ENCODE measurements at regions of chr1 and their contacts with region 1.

Region 1: DNA sequence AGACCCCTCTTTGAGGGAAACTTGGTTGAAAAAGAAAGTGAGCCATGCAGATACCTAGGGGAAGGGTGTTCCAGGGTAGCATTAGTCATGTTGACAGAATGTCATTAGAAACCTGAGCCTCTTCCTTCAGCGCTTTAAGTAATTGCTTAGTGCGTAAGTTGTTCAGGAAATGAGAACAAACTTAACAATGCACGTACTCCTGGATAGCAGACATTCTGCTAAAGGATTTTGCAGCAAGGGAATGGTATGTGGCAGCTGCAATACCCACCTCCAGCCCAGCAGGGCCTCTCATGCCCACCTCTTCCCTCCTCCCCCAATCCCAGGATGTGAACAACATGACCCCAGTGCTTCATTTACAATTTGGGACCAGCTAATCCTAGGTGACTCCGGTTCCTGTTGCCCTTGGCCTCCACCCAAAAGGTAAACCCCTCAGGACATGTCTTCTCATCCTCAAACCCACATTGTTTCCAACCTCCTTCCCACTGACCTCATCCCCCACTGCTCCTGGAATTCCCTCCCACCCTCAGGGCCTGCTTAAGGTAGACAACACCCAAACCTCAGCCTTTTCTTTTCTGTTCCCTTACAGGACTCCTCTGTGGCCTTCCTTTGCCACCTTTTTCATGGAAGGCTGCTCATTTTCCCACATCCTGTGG is 98.0 kb upstream of the BCAR3 start:
- DNase-seq: no peak
- H3K4me3 ChIP-seq: no peak overlapping the region
- H3K27ac ChIP-seq: no peak overlapping the region
- H3K27me3 ChIP-seq: peaks cover 0 to 11% (median 0%) of the 10 kb centered on the region in 45 donors
- CTCF ChIP-seq: no peak

Region 2: GRCh38 chr1:93502561-93502960 is 277.1 kb before region 1 on chr1:
- intact Hi-C with region 1: no loop called
- DNase-seq: no peak
- H3K4me3 ChIP-seq: no peak overlapping the region
- H3K27ac ChIP-seq: no peak overlapping the region
- H3K27me3 ChIP-seq: peaks cover 0 to 10% (median 0%) of the 10 kb centered on the region in 45 donors
- CTCF ChIP-seq: no peak

Region 3: GRCh38 chr1:93807307-93807930 is 27.8 kb after region 1 on chr1:
- intact Hi-C with region 1: loop called in 1 of 2 experiments (anchors 2 kb)
- DNase-seq: no peak
- H3K4me3 ChIP-seq: no peak overlapping the region
- H3K27ac ChIP-seq: no peak overlapping the region
- H3K27me3 ChIP-seq: peaks cover 0 to 3% (median 0%) of the 10 kb centered on the region in 45 donors
- CTCF ChIP-seq: no peak